OCI-LY7 (cell line): ENCODE measurements at regions of chr9 and their contacts with region 1.

Region 1: DNA sequence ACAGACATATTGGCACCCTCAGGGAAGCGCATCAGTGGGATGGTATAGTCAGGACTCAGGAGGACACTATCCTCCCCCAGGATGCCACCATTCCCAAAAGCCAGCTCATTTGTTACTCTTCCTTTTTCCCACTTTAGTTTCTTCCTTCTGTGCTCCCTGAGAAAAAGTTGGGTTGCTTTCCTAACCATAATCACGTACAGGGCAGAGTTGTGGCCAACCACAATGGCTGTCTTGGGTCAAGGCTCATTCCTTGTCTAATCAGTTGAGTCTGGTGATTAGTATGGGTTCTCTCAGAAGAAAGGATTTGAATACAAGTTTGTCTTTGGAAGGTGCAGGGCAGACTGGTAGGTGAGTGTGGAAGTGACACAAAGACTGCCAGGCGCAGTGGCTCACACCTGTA is 26.6 kb upstream of the ATP6V1G1 start:
- DNase-seq: no peak
- H3K4me3 ChIP-seq: no peak overlapping the region
- H3K27ac ChIP-seq: no peak overlapping the region
- H3K4me1 ChIP-seq: peaks cover 3% of the 10 kb centered on the region
- CTCF ChIP-seq: no peak

Region 2: GRCh38 chr9:114525505-114525904 is 35.5 kb before region 1 on chr9:
- CTCF ChIA-PET with region 1: no interaction called
- POLR2A ChIA-PET with region 1: no interaction called
- intact Hi-C with region 1: no loop called
- DNase-seq: no peak
- H3K4me3 ChIP-seq: no peak overlapping the region
- H3K27ac ChIP-seq: no peak overlapping the region
- H3K4me1 ChIP-seq: no peaks in the 10 kb centered on the region
- CTCF ChIP-seq: no peak

Region 3: GRCh38 chr9:114538241-114538640 is 22.7 kb before region 1 on chr9:
- CTCF ChIA-PET with region 1: no interaction called
- POLR2A ChIA-PET with region 1: interaction called, 8 read pairs
- intact Hi-C with region 1: loop called (anchors 2 kb)
- DNase-seq: peak; percentile 84
- H3K4me3 ChIP-seq: no peak overlapping the region
- H3K27ac ChIP-seq: no peak overlapping the region
- H3K4me1 ChIP-seq: peaks cover 26% of the 10 kb centered on the region
- CTCF ChIP-seq: peak; percentile 84

Region 4: GRCh38 chr9:114611516-114612271 is 50.7 kb after region 1 on chr9:
- CTCF ChIA-PET with region 1: no interaction called
- POLR2A ChIA-PET with region 1: interaction called, 4 read pairs
- intact Hi-C with region 1: loop called (anchors 2 kb)
- DNase-seq: peak; percentile 62
- H3K4me3 ChIP-seq: peak overlapping the region; percentile 95
- H3K27ac ChIP-seq: peak overlapping the region; percentile 86
- H3K4me1 ChIP-seq: peaks cover 72% of the 10 kb centered on the region
- CTCF ChIP-seq: no peak